CD8-positive, alpha-beta T cell (primary cell): ENCODE measurements at regions of chr1 and their contacts with region 1.

Region 1: DNA sequence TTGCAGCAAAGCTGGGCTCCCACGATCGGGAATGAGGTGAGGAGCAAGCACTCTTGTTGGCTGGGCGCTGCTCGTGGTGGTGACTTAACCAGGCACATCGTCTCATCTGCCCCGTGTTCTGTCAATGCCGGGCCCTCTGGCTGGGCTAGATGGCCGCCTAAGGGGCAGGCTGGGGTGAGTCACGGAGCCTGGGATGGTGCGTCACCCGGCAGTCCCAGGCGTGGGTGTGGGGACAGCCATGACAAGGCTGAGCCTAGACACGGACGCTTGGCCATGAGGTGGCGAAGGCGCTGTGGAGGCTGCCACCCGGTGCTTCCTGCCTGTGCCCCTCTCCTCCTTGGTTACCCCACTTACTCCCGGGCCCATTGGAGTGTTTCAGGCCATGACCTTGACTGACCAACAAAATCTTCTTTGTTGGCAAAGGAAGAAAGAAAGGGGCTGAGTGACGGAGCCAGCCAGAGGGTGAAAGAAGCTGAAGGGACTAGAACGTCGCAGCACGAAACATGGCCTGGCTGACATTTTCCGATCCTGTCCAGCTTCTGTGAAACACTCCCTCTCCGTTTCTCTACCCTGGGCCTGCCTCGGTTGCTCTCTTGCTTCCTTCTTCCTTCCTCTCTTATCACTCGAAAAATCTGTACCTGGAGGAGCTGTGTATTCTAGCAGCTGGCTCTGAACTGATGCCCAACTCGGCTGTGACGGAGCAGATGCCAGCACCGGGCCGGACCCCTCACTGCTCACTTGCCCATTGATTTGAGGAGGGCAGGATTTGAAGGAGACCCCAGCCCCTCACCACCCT is 596 bp downstream of the CD247 start:
- DNase-seq: peak; percentile 56 to 92 (median 86)
- ATAC-seq: peak; percentile 75
- H3K4me3 ChIP-seq: peak overlapping the region; percentile 94 to 98
- H3K4me3 Mint-ChIP-seq: peak overlapping the region; percentile 99
- H3K27ac ChIP-seq: peak overlapping the region; percentile 94 to 95
- H3K27ac Mint-ChIP-seq: peak overlapping the region; percentile 100
- H3K4me1 ChIP-seq: peaks cover 40% of the 10 kb centered on the region
- H3K4me1 Mint-ChIP-seq: peaks cover 51% of the 10 kb centered on the region
- H3K27me3 ChIP-seq: no peaks in the 10 kb centered on the region
- H3K27me3 Mint-ChIP-seq: no peaks in the 10 kb centered on the region
- CTCF ChIP-seq: no peak

Region 2: GRCh38 chr1:167401260-167401873 is 116.4 kb before region 1 on chr1:
- CTCF ChIA-PET with region 1: interaction called, 14 read pairs
- POLR2A ChIA-PET with region 1: no interaction called
- intact Hi-C with region 1: loop called in 1 of 2 experiments (anchors 5 kb)
- DNase-seq: peak; percentile 4 to 79 (median 51)
- ATAC-seq: peak; percentile 73
- H3K4me3 ChIP-seq: no peak overlapping the region
- H3K4me3 Mint-ChIP-seq: no peak overlapping the region
- H3K27ac ChIP-seq: no peak overlapping the region
- H3K27ac Mint-ChIP-seq: no peak overlapping the region
- H3K4me1 ChIP-seq: no peaks in the 10 kb centered on the region
- H3K4me1 Mint-ChIP-seq: peaks cover 5% of the 10 kb centered on the region
- H3K27me3 ChIP-seq: no peaks in the 10 kb centered on the region
- H3K27me3 Mint-ChIP-seq: no peaks in the 10 kb centered on the region
- CTCF ChIP-seq: peak; percentile 36

Region 3: GRCh38 chr1:167447521-167448136 is 70.1 kb before region 1 on chr1:
- CTCF ChIA-PET with region 1: interaction called, 55 read pairs
- POLR2A ChIA-PET with region 1: interaction called, 51 read pairs
- intact Hi-C with region 1: loop called (anchors 1 to 5 kb)
- DNase-seq: peak in 8 of 9 experiments; percentile 31 to 89 (median 76)
- ATAC-seq: peak; percentile 82
- H3K4me3 ChIP-seq: peak overlapping the region; percentile 19 to 32
- H3K4me3 Mint-ChIP-seq: peak overlapping the region; percentile 68
- H3K27ac ChIP-seq: peak overlapping the region; percentile 82 to 89
- H3K27ac Mint-ChIP-seq: peak overlapping the region; percentile 97
- H3K4me1 ChIP-seq: peaks cover 73% of the 10 kb centered on the region
- H3K4me1 Mint-ChIP-seq: peaks cover 85% of the 10 kb centered on the region
- H3K27me3 ChIP-seq: no peaks in the 10 kb centered on the region
- H3K27me3 Mint-ChIP-seq: no peaks in the 10 kb centered on the region
- CTCF ChIP-seq: no peak

Region 4: GRCh38 chr1:167467126-167467710 is 50.5 kb before region 1 on chr1:
- CTCF ChIA-PET with region 1: interaction called, 11 read pairs
- POLR2A ChIA-PET with region 1: interaction called, 4 read pairs
- intact Hi-C with region 1: no loop called
- DNase-seq: no peak
- ATAC-seq: no peak
- H3K4me3 ChIP-seq: no peak overlapping the region
- H3K4me3 Mint-ChIP-seq: no peak overlapping the region
- H3K27ac ChIP-seq: peak overlapping the region in 1 of 2 experiments; percentile 46
- H3K27ac Mint-ChIP-seq: peak overlapping the region; percentile 55
- H3K4me1 ChIP-seq: peaks cover 72% of the 10 kb centered on the region
- H3K4me1 Mint-ChIP-seq: peaks cover 86% of the 10 kb centered on the region
- H3K27me3 ChIP-seq: no peaks in the 10 kb centered on the region
- H3K27me3 Mint-ChIP-seq: no peaks in the 10 kb centered on the region
- CTCF ChIP-seq: no peak

Region 5: GRCh38 chr1:167486090-167486824 is 31.5 kb before region 1 on chr1:
- CTCF ChIA-PET with region 1: interaction called, 7 read pairs
- POLR2A ChIA-PET with region 1: interaction called, 8 read pairs
- intact Hi-C with region 1: loop called in 1 of 2 experiments (anchors 5 kb)
- DNase-seq: peak in 4 of 9 experiments; percentile 23 to 71 (median 52)
- ATAC-seq: no peak
- H3K4me3 ChIP-seq: peak overlapping the region in 1 of 2 experiments; percentile 13
- H3K4me3 Mint-ChIP-seq: peak overlapping the region; percentile 78
- H3K27ac ChIP-seq: peak overlapping the region; percentile 36 to 77
- H3K27ac Mint-ChIP-seq: peak overlapping the region; percentile 94
- H3K4me1 ChIP-seq: peaks cover 96% of the 10 kb centered on the region
- H3K4me1 Mint-ChIP-seq: peaks cover 93% of the 10 kb centered on the region
- H3K27me3 ChIP-seq: no peaks in the 10 kb centered on the region
- H3K27me3 Mint-ChIP-seq: no peaks in the 10 kb centered on the region
- CTCF ChIP-seq: no peak

Region 6: GRCh38 chr1:167542109-167543032 is 24.6 kb after region 1 on chr1:
- CTCF ChIA-PET with region 1: interaction called, 13 read pairs
- POLR2A ChIA-PET with region 1: interaction called, 5 read pairs
- intact Hi-C with region 1: no loop called
- DNase-seq: no peak
- ATAC-seq: no peak
- H3K4me3 ChIP-seq: no peak overlapping the region
- H3K4me3 Mint-ChIP-seq: no peak overlapping the region
- H3K27ac ChIP-seq: no peak overlapping the region
- H3K27ac Mint-ChIP-seq: no peak overlapping the region
- H3K4me1 ChIP-seq: no peaks in the 10 kb centered on the region
- H3K4me1 Mint-ChIP-seq: peaks cover 10% of the 10 kb centered on the region
- H3K27me3 ChIP-seq: no peaks in the 10 kb centered on the region
- H3K27me3 Mint-ChIP-seq: no peaks in the 10 kb centered on the region
- CTCF ChIP-seq: no peak